CD8-positive, alpha-beta T cell (primary cell): ENCODE measurements at regions of chr12 and their contacts with region 1.

Region 1: GRCh38 chr12:115132145-115132544 is 448.2 kb upstream of the TBX3 start:
- DNase-seq: no peak
- ATAC-seq: no peak
- H3K4me3 ChIP-seq: no peak overlapping the region
- H3K4me3 Mint-ChIP-seq: no peak overlapping the region
- H3K27ac ChIP-seq: no peak overlapping the region
- H3K27ac Mint-ChIP-seq: no peak overlapping the region
- H3K4me1 ChIP-seq: no peaks in the 10 kb centered on the region
- H3K4me1 Mint-ChIP-seq: no peaks in the 10 kb centered on the region
- H3K27me3 ChIP-seq: no peaks in the 10 kb centered on the region
- H3K27me3 Mint-ChIP-seq: no peaks in the 10 kb centered on the region
- CTCF ChIP-seq: no peak

Region 2: DNA sequence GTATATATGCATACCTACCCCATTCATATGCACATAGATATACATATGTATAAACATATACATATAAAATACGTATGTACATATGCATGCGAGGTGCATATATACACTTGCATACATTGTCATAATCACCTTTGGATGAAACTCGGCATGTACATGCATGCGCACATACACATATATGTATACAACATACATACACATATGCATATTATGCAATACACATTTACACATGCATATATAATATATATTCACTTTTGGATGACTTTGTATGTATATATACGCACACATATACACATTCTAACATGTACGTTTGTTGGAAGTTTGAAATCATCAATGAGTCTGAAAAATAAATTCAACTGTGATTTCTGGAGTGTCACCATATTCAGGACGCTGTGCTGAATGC is 46.6 kb before region 1 on chr12:
- CTCF ChIA-PET with region 1: no interaction called
- POLR2A ChIA-PET with region 1: no interaction called
- intact Hi-C with region 1: loop called in 1 of 2 experiments (anchors 2 kb)
- DNase-seq: no peak
- ATAC-seq: no peak
- H3K4me3 ChIP-seq: no peak overlapping the region
- H3K4me3 Mint-ChIP-seq: no peak overlapping the region
- H3K27ac ChIP-seq: no peak overlapping the region
- H3K27ac Mint-ChIP-seq: no peak overlapping the region
- H3K4me1 ChIP-seq: no peaks in the 10 kb centered on the region
- H3K4me1 Mint-ChIP-seq: no peaks in the 10 kb centered on the region
- H3K27me3 ChIP-seq: no peaks in the 10 kb centered on the region
- H3K27me3 Mint-ChIP-seq: no peaks in the 10 kb centered on the region
- CTCF ChIP-seq: no peak